Heart right ventricle (tissue), 16 donors: ENCODE measurements at regions of chr20 and their contacts with region 1.

Region 1: GRCh38 chr20:55291261-55291660 is 714.1 kb downstream of the CBLN4 start:
- DNase-seq: no peak
- ATAC-seq: no peak
- H3K4me3 ChIP-seq: no peak overlapping the region
- H3K27ac ChIP-seq: no peak overlapping the region
- H3K4me1 ChIP-seq: no peaks in the 10 kb centered on the region
- H3K27me3 ChIP-seq: no peaks in the 10 kb centered on the region
- CTCF ChIP-seq: no peak

Region 2: DNA sequence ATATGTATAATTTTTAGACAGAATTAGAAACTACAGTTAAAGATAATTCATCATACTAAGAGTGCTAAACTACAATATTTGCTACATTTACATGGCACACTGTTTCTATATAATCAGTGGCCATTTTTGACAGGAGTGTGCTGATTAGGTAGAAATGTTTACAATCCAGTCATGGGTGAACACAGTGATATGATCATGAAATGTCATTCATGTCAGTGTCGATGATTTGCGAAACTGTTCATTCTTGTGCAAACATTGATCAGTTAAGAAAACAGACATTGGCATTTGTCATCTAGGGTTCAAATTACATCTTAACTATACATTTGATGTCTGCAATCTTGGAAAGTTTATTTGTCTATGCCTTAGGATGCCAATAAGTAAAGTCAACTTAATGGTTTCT is 341.0 kb before region 1 on chr20:
- intact Hi-C with region 1: no loop called
- DNase-seq: no peak
- ATAC-seq: no peak
- H3K4me3 ChIP-seq: no peak overlapping the region
- H3K27ac ChIP-seq: no peak overlapping the region
- H3K4me1 ChIP-seq: no peaks in the 10 kb centered on the region
- H3K27me3 ChIP-seq: no peaks in the 10 kb centered on the region
- CTCF ChIP-seq: no peak

Region 3: DNA sequence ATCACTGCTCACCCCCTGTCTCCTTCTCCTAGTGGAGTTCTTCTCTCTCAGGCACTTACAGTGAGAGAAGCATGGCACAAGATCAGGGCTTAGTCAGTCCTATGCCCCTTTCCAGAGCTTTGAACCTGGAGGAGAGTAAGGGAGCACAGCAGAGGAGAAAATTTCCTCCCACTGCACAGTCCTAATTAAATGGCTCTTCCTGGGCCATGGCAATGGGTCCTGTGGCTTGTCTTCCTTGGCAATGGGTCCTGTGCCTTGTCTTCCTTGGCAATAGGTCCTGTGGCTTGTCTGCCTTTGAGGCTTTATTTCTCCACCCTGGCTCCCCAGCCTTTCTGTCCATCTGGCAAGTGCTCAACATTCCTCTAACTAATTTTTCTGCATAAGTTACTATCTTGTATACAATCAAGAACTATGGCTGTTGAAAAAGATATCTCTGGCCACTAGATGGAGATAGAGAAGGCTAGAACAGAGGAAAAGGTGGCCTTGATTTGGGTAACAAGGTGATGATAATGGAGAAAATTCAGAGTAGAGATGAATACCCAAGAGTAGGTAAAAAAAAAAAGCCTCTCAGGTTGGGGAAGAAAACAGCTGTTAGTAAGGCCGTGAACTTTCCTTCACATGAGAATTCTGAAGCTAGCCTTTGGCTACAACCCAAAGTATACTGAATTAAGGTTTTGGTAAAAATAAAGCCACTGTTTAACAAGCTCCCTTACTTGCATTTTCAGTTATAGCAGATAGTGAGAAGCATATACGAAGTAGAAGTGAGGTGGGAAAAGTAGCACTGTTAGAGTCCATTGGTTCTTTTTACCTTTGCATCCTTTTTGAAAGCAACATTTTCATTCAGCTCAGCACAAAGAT is 310.9 kb before region 1 on chr20:
- intact Hi-C with region 1: no loop called
- DNase-seq: no peak
- ATAC-seq: no peak
- H3K4me3 ChIP-seq: no peak overlapping the region
- H3K27ac ChIP-seq: no peak overlapping the region
- H3K4me1 ChIP-seq: no peaks in the 10 kb centered on the region
- H3K27me3 ChIP-seq: peaks cover 0 to 5% (median 0%) of the 10 kb centered on the region in 7 donors
- CTCF ChIP-seq: peak in 8 of 9 donors; percentile 19 to 47 (median 28)

Region 4: GRCh38 chr20:55232647-55233046 is 58.6 kb before region 1 on chr20:
- intact Hi-C with region 1: loop called in 1 of 10 experiments (anchors 10 kb)
- DNase-seq: no peak
- ATAC-seq: no peak
- H3K4me3 ChIP-seq: no peak overlapping the region
- H3K27ac ChIP-seq: no peak overlapping the region
- H3K4me1 ChIP-seq: no peaks in the 10 kb centered on the region
- H3K27me3 ChIP-seq: no peaks in the 10 kb centered on the region
- CTCF ChIP-seq: no peak